ENCODE measurements at regions of chr9 and their contacts with region 1.

Region 1: GRCh38 chr9:6525326-6526045 is 112.5 kb downstream of the UHRF2 start:
- DNase-seq: no peak
- H3K4me3 ChIP-seq: no peak overlapping the region
- H3K27ac ChIP-seq: no peak overlapping the region
- H3K4me1 ChIP-seq: no peaks in the 10 kb centered on the region
- H3K27me3 ChIP-seq: no peaks in the 10 kb centered on the region
- CTCF ChIP-seq: no peak

Region 2: GRCh38 chr9:5144217-5144616 is 1381.3 kb before region 1 on chr9:
- CTCF ChIA-PET with region 1: no interaction called
- POLR2A ChIA-PET with region 1: interaction called, 25 read pairs
- intact Hi-C with region 1: no loop called
- DNase-seq: no peak
- H3K4me3 ChIP-seq: no peak overlapping the region
- H3K27ac ChIP-seq: no peak overlapping the region
- H3K4me1 ChIP-seq: no peaks in the 10 kb centered on the region
- H3K27me3 ChIP-seq: no peaks in the 10 kb centered on the region
- CTCF ChIP-seq: no peak

Region 3: DNA sequence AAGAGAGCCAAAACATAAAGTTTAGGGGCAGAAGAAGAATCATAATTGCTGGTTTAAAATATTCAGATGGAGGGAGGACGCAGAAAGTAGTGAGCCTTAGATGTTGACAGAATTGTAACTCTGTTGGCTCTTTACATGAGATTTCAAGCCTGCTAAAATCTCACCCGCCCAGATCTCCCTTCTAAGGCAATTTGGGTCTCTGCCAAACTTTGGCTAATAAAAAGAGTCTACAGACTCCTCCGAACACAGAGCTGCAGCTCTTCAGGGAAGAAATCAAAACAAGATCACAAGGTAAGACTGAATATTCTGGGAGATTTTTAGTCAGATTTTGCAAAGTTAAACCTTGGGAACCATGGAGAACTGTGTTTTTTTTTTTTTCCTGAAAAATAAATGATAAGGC is 309.9 kb before region 1 on chr9 and contains the start of gene IL33:
- CTCF ChIA-PET with region 1: no interaction called
- POLR2A ChIA-PET with region 1: no interaction called
- intact Hi-C with region 1: no loop called
- DNase-seq: no peak
- H3K4me3 ChIP-seq: no peak within 1 kb of the TSS
- H3K27ac ChIP-seq: no peak within 1 kb of the TSS
- H3K4me1 ChIP-seq: peaks cover 6% of the 10 kb centered on the region; the same call in 1 of the 2 replicates
- H3K27me3 ChIP-seq: no peaks in the 10 kb centered on the region
- CTCF ChIP-seq: no peak
- total RNA-seq, gene IL33: not detected in 2 replicates

Measured in PC-9 (cell line).